PC-3 (cell line): ENCODE measurements at regions of chr1 and their contacts with region 1.

Region 1: DNA sequence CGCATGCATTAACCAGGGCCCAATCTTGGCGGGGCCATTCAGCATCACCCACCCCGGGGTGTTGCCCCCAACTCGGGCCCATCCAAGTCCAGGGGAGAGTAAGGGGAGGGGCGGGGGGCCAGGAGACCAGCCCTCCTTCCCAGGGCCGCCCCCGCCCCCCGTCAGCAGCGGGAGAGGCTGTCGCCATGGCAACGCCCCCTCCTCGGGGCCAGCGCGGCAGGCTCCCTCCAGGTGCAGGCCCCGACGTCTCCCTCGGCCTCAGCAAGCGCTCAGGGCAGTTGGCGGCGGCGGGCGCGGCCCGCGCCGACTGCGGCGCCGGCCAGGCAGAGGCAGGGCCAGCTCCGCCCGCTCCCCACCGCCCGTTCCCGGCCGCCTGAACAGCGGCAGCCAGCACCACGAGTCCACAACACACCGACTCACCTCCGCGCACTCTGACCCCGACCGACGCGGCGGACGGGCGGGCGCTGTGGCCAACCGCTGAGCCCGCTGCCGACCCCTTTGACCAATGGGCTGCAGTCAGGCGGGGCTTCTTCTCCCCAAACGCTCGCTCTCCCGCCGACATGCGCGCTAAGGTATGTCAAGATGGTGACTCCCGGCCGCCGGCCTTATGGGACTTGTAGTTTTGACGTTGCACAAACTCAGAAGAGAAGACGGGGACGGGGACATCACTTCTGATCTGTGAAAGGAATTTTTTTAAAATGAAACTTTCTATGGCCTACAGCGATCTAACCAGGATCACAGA is at the start of gene ERI3:
- DNase-seq: peak; percentile 97
- ATAC-seq: peak; percentile 100
- H3K4me3 ChIP-seq: peak within 1 kb of the TSS; percentile 86
- H3K27ac ChIP-seq: peak within 1 kb of the TSS; percentile 42
- H3K4me1 ChIP-seq: peaks cover 33% of the 10 kb centered on the region
- H3K27me3 ChIP-seq: no peaks in the 10 kb centered on the region
- CTCF ChIP-seq: no peak
- total RNA-seq, gene ERI3: 138 and 165 TPM in 2 replicates

Region 2: DNA sequence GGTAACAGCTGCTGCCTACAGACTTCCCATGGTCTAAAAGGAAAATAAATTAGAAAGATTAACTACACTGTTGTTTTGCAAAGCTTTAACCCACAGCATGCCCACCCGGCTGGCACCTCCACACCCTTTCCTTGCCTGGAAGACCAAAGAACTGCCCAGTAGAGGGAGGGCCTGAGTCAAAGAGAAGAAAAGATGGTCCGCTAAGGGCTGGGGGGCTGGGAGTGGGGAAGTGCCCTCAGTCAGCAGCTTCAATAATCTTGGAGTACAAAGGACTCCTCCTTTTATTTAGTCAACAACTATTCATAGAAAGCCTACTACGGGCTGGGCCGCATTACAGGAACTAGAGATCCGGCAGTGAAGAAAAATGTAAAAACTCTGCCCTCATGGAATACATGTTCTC is 40.6 kb before region 1 on chr1:
- CTCF ChIA-PET with region 1: no interaction called
- POLR2A ChIA-PET with region 1: no interaction called
- intact Hi-C with region 1: no loop called
- DNase-seq: no peak
- ATAC-seq: no peak
- H3K4me3 ChIP-seq: no peak overlapping the region
- H3K27ac ChIP-seq: no peak overlapping the region
- H3K4me1 ChIP-seq: no peaks in the 10 kb centered on the region
- H3K27me3 ChIP-seq: no peaks in the 10 kb centered on the region
- CTCF ChIP-seq: no peak; the same call in 1 of the 2 replicates

Region 3: GRCh38 chr1:44327679-44328491 is 27.1 kb before region 1 on chr1:
- CTCF ChIA-PET with region 1: no interaction called
- POLR2A ChIA-PET with region 1: no interaction called
- intact Hi-C with region 1: loop called (anchors 1 kb)
- DNase-seq: peak; percentile 99
- ATAC-seq: peak; percentile 94
- H3K4me3 ChIP-seq: peak overlapping the region; percentile 23; the same call in 1 of the 2 replicates
- H3K27ac ChIP-seq: peak overlapping the region; percentile 91
- H3K4me1 ChIP-seq: peaks cover 41% of the 10 kb centered on the region
- H3K27me3 ChIP-seq: no peaks in the 10 kb centered on the region
- CTCF ChIP-seq: no peak